ENCODE measurements at regions of chr1 and their contacts with region 1.

Region 1: DNA sequence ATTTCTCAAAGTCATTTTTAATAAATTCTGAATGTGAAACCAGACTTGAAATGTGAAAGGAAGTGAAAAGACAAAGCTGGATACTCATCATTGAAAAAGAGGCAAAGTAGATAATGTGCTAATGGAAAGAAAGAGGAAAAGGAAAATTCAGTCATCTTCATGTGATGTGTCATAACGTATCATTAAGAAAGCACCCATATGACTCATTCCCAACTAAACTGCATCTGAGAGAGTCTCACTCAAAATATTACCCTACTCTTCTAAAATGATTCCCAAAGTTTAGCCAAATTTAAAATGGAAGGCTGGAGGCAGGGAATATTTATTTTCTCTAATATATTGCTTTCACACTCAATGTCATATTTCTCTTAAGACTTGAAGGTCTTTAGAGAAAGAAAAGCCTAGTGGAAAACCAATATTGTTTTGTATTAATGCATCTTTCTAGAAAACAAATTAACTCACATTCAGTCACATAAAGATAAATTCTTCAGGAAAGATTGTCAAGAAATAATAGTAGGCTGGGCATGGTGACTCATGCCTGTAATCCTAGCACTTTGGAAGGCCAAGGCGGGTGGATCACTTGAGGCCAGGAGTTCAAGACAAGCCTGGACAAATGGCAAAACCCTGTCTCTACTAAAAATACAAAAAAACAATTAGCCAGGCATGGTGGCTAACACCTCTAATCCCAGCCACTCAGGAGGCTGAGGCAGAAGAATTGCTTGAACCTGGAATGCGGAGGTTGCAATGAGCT is 129.9 kb downstream of the SLC30A10 start:
- DNase-seq: peak; percentile 69
- H3K4me3 ChIP-seq: no peak overlapping the region
- H3K27ac ChIP-seq: peak overlapping the region; percentile 22
- H3K4me1 ChIP-seq: peaks cover 4% of the 10 kb centered on the region
- H3K27me3 ChIP-seq: no peaks in the 10 kb centered on the region
- CTCF ChIP-seq: no peak

Region 2: DNA sequence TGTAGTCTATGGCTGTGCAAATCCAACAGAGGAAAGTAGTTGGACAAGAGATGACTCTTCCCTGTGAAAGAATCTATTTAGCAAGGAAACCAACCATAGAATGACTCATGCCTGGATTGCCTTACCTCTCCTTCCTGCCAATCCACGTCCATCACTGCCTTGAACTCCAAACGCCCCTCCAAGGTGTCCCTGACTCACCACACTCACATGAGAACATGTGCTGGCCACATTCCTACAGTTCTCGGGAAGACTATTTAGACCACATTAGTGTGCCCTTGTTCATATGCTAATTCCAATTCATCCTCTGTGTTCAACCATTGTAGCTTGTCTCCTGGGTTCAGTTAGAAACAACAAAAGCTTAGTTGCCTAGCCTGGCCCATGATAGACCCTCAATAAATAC is 27.4 kb before region 1 on chr1:
- CTCF ChIA-PET with region 1: no interaction called
- dilution Hi-C with region 1: no loop called
- in situ Hi-C with region 1: no loop called
- intact Hi-C with region 1: loop called (anchors 2 kb)
- DNase-seq: peak; percentile 95
- H3K4me3 ChIP-seq: no peak overlapping the region
- H3K27ac ChIP-seq: no peak overlapping the region
- H3K4me1 ChIP-seq: peaks cover 7% of the 10 kb centered on the region
- H3K27me3 ChIP-seq: no peaks in the 10 kb centered on the region
- CTCF ChIP-seq: no peak

Region 3: GRCh38 chr1:219824338-219824737 is 25.9 kb after region 1 on chr1:
- CTCF ChIA-PET with region 1: no interaction called
- dilution Hi-C with region 1: no loop called
- in situ Hi-C with region 1: no loop called
- intact Hi-C with region 1: no loop called
- DNase-seq: no peak
- H3K4me3 ChIP-seq: no peak overlapping the region
- H3K27ac ChIP-seq: no peak overlapping the region
- H3K4me1 ChIP-seq: no peaks in the 10 kb centered on the region
- H3K27me3 ChIP-seq: no peaks in the 10 kb centered on the region
- CTCF ChIP-seq: no peak

Measured in mammary epithelial cell (primary cell).